GM12878 (cell line): ENCODE measurements at regions of chr7 and their contacts with region 1.

Region 1: GRCh38 chr7:25565949-25566348 is 337.7 kb upstream of the NPVF start:
- DNase-seq: no peak
- ATAC-seq: no peak; the same call in 2 of the 3 replicates
- H3K4me3 ChIP-seq: no peak overlapping the region
- H3K27ac ChIP-seq: no peak overlapping the region
- H3K4me1 ChIP-seq: no peaks in the 10 kb centered on the region
- H3K27me3 ChIP-seq: peaks cover 1 to 3% of the 10 kb centered on the region in 2 experiments; a peak in 1 of 4 replicates
- CTCF ChIP-seq: peak; percentile 97 to 100 (median 100); a peak in 5 of 6 replicates
- EP300 ChIP-seq: no peak
- POLR2A ChIP-seq: no peak
- RAD21 ChIP-seq: peak; percentile 90

Region 2: DNA sequence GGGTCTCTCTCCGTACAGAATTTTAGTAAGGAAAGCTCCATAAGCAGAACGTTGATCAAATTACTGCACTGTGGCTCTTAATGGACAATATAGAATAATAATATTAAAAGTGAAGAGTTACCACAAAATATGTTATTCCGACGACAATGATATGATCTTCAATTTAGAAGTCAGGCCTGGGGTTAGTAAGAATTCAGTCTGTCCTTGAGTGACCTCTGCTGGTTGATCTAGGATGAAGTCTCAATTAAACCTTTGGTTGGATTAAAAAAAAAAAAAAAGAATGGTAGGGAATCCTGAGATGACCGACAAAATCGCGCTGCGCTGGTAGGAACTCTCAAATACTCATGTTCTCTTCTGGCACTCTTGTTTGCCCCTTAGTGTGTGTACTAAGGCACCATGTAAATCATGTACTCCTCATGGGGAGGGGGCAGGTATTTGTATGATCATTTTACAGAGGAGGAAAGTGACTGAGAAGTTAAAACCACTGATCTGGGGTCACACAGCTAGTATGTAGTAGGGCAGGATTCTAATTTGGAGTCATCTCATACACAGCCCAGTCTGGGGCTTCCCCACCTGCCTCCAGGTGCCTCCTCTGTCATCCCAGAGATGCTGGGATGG is 176.4 kb before region 1 on chr7:
- CTCF ChIA-PET with region 1: interaction called, 35 read pairs
- POLR2A ChIA-PET with region 1: no interaction called
- RAD21 ChIA-PET with region 1: interaction called, 7 read pairs
- SMC1A ChIA-PET with region 1: interaction called, 21 read pairs
- in situ Hi-C with region 1: loop called (anchors 25 kb)
- intact Hi-C with region 1: loop called (anchors 1 kb)
- DNase-seq: peak; percentile 2
- ATAC-seq: 0 out of 3 replicates have a peak, but pooled peaks have one; percentile 23
- H3K4me3 ChIP-seq: no peak overlapping the region
- H3K27ac ChIP-seq: no peak overlapping the region
- H3K4me1 ChIP-seq: no peaks in the 10 kb centered on the region
- H3K27me3 ChIP-seq: peaks cover 0 to 3% of the 10 kb centered on the region in 2 experiments; a peak in 2 of 4 replicates
- CTCF ChIP-seq: peak; percentile 14 to 47 (median 35); a peak in 4 of 6 replicates
- EP300 ChIP-seq: no peak
- POLR2A ChIP-seq: no peak
- RAD21 ChIP-seq: peak; percentile 55

Region 3: GRCh38 chr7:25578991-25579777 is 13.2 kb after region 1 on chr7:
- CTCF ChIA-PET with region 1: interaction called, 18 read pairs
- POLR2A ChIA-PET with region 1: no interaction called
- RAD21 ChIA-PET with region 1: no interaction called
- SMC1A ChIA-PET with region 1: interaction called, 4 read pairs
- in situ Hi-C with region 1: no loop called
- intact Hi-C with region 1: no loop called
- DNase-seq: no peak
- ATAC-seq: no peak
- H3K4me3 ChIP-seq: no peak overlapping the region
- H3K27ac ChIP-seq: no peak overlapping the region
- H3K4me1 ChIP-seq: no peaks in the 10 kb centered on the region
- H3K27me3 ChIP-seq: no peaks in the 10 kb centered on the region; a peak in 2 of 4 replicates
- CTCF ChIP-seq: no peak
- EP300 ChIP-seq: no peak
- POLR2A ChIP-seq: no peak
- RAD21 ChIP-seq: no peak

Region 4: DNA sequence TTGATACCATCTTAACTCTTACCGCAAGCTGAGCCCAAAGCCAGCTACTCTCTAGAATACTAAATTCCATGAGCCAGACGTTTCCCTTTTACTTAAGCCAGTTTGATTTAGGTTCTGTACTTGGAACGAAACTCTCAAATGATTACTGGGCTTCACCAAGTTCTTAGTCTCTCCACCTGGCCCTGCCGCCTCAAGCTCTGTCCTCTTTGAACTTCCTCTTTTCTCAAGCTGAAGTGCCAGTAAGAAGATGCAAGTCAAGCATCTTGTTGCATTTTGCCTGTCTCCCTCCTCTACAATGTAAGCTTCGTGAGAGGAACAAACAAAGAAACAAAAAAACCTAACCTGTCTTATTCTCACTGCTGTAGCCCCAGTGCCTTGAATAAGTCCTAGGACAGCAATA is 20.6 kb after region 1 on chr7:
- CTCF ChIA-PET with region 1: interaction called, 26 read pairs
- POLR2A ChIA-PET with region 1: no interaction called
- RAD21 ChIA-PET with region 1: no interaction called
- SMC1A ChIA-PET with region 1: interaction called, 4 read pairs
- in situ Hi-C with region 1: no loop called
- intact Hi-C with region 1: no loop called
- DNase-seq: no peak
- ATAC-seq: no peak
- H3K4me3 ChIP-seq: no peak overlapping the region
- H3K27ac ChIP-seq: no peak overlapping the region
- H3K4me1 ChIP-seq: no peaks in the 10 kb centered on the region
- H3K27me3 ChIP-seq: no peaks in the 10 kb centered on the region; a peak in 1 of 4 replicates
- CTCF ChIP-seq: no peak
- EP300 ChIP-seq: no peak
- POLR2A ChIP-seq: no peak
- RAD21 ChIP-seq: no peak

Region 5: GRCh38 chr7:25851332-25852210 is 285.6 kb after region 1 on chr7:
- CTCF ChIA-PET with region 1: interaction called, 30 read pairs
- POLR2A ChIA-PET with region 1: no interaction called
- RAD21 ChIA-PET with region 1: interaction called, 7 read pairs
- SMC1A ChIA-PET with region 1: interaction called, 4 read pairs
- in situ Hi-C with region 1: no loop called
- intact Hi-C with region 1: loop called (anchors 2 kb)
- DNase-seq: no peak
- ATAC-seq: peak; percentile 87
- H3K4me3 ChIP-seq: no peak overlapping the region
- H3K27ac ChIP-seq: no peak overlapping the region
- H3K4me1 ChIP-seq: peaks cover 4% of the 10 kb centered on the region; the same call in 1 of the 2 replicates
- H3K27me3 ChIP-seq: peaks cover 8 to 22% of the 10 kb centered on the region in 2 experiments
- CTCF ChIP-seq: peak; percentile 82 to 87 (median 85)
- EP300 ChIP-seq: no peak
- POLR2A ChIP-seq: no peak
- RAD21 ChIP-seq: peak; percentile 82